Prostate gland (tissue), 2 donors: ENCODE measurements at regions of chr6 and their contacts with region 1.

Region 1: GRCh38 chr6:108589287-108589791 is 28.6 kb downstream of the FOXO3 start:
- DNase-seq: peak; percentile 95
- H3K4me3 ChIP-seq: peak overlapping the region in 1 of 2 donors; percentile 12
- H3K27ac ChIP-seq: peak overlapping the region; percentile 85
- H3K4me1 ChIP-seq: peaks cover 60% of the 10 kb centered on the region
- H3K27me3 ChIP-seq: no peaks in the 10 kb centered on the region
- CTCF ChIP-seq: no peak
- POLR2A ChIP-seq: peak; percentile 11

Region 2: DNA sequence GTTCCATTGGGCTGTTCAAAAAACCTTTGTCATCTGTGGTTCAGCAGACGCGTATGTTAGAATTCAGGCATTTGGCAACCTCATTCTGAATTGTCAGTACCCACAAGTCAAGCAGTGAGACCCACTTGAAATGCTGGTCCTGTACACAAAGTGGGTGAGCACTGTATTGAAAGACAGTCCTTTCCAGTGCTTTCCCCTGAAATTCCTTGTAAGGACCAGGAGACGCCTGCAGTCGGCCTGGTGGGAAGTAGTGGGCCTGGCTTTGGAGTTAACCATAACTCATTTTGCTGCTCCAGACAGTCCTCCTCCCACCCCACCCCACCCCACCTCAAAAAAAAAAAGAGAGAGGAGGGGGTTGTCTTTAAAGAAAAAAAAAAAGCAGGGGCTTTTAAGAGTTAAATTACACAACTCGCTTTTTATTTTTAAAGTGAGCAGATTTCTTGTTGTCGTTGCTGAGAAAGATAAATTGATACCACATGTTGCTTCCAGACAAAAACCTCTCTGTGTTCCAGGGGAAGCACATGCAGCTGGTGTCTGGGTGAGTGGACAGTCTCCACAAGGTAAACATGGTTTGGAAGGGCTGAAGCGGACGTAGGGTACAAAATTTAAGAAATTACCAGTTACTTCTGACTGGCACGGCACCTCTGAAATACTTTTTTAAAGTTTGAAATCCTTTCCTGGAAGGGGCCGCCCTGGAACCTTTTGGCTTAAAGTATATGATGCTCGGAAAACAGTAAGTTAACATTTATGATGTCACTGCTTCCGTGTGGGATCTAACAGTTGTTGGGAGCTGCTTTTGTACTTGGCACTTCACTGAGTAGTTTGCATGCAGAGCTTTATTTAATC is 66.7 kb after region 1 on chr6:
- intact Hi-C with region 1: loop called (anchors 2 kb)
- DNase-seq: no peak
- H3K4me3 ChIP-seq: no peak overlapping the region
- H3K27ac ChIP-seq: peak overlapping the region; percentile 73 to 75
- H3K4me1 ChIP-seq: peaks cover 31% of the 10 kb centered on the region
- H3K27me3 ChIP-seq: no peaks in the 10 kb centered on the region
- CTCF ChIP-seq: no peak
- POLR2A ChIP-seq: no peak

Region 3: DNA sequence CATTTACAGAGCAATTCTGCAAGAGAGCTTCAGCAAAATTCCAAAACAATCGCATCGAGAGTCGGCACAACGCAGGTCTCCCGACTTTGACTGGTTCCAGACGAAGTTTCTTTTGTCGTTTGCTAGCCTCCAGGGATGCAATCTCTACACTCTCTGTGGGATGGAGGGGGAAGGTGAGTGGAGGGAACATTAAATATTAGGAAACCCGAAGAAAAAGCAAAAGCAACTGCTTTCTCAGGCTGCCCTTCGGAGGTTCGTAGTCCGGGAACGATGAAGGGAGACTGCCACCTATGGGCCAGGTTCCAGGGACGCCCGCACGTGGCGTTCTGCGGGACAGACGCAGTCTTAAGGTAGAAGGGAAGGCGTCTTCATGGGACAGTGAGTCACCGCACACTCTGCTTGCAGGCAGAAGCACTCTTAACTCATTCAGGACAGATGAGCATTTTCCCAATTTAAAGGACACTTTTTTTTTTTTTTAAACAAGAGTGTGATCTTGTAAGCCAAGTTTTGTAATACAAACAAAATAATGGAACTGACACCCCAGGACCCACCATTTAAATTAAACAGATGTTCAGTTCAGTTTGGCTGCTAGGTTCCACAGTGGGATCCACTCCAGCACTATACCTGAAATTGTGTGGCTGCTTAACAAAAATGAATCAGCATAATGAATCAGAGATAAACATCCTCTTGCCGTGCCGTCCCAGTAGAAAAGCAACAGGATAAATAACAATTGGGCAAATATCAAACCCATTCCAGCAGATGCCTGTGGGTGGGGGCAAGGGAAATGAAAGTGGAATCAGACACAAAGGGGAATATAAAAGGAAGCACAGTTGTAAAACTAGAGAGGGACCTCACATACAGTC is 193.1 kb after region 1 on chr6:
- intact Hi-C with region 1: no loop called
- DNase-seq: peak; percentile 90
- H3K4me3 ChIP-seq: peak overlapping the region; percentile 35 to 39
- H3K27ac ChIP-seq: peak overlapping the region; percentile 63 to 67
- H3K4me1 ChIP-seq: peaks cover 3% of the 10 kb centered on the region
- H3K27me3 ChIP-seq: no peaks in the 10 kb centered on the region
- CTCF ChIP-seq: peak; percentile 55 to 81 (median 80)
- POLR2A ChIP-seq: no peak

Region 4: GRCh38 chr6:108850669-108851465 is 261.5 kb after region 1 on chr6:
- intact Hi-C with region 1: no loop called
- DNase-seq: no peak
- H3K4me3 ChIP-seq: no peak overlapping the region
- H3K27ac ChIP-seq: no peak overlapping the region
- H3K4me1 ChIP-seq: no peaks in the 10 kb centered on the region
- H3K27me3 ChIP-seq: no peaks in the 10 kb centered on the region
- CTCF ChIP-seq: no peak
- POLR2A ChIP-seq: no peak